Head of caudate nucleus (tissue), 42 donors: ENCODE measurements at regions of chr4 and their contacts with region 1.

Region 1: DNA sequence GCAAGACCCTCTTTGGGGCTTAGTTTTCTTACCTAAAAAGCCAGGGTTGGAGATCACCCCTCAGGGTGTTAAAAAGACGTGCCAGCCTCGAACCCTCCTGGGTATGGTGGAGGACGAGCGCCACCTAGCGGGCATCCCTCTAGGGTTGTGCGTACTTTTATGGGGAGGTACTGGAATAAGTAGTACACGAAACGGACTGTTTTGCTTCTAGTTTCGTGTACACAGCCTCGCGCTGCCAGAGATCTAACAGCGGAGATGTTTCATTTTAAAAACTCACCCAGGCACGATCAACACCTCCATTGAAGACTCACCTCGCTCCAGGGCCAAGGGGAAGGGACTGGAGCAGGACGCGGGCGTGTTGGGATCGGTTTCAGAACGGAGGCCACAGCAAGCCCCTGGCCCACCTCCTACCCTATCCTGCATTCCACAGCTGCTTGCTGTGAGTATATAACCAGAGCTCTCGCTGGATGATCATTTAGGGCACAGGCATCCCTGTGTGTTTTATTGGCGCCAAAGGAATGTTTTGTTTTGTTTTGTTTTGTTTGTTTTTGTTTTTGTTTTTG is 4.8 kb upstream of the NKX3-2 start:
- DNase-seq: peak in 41 of 42 donors; percentile 46 to 93 (median 78)

Region 2: DNA sequence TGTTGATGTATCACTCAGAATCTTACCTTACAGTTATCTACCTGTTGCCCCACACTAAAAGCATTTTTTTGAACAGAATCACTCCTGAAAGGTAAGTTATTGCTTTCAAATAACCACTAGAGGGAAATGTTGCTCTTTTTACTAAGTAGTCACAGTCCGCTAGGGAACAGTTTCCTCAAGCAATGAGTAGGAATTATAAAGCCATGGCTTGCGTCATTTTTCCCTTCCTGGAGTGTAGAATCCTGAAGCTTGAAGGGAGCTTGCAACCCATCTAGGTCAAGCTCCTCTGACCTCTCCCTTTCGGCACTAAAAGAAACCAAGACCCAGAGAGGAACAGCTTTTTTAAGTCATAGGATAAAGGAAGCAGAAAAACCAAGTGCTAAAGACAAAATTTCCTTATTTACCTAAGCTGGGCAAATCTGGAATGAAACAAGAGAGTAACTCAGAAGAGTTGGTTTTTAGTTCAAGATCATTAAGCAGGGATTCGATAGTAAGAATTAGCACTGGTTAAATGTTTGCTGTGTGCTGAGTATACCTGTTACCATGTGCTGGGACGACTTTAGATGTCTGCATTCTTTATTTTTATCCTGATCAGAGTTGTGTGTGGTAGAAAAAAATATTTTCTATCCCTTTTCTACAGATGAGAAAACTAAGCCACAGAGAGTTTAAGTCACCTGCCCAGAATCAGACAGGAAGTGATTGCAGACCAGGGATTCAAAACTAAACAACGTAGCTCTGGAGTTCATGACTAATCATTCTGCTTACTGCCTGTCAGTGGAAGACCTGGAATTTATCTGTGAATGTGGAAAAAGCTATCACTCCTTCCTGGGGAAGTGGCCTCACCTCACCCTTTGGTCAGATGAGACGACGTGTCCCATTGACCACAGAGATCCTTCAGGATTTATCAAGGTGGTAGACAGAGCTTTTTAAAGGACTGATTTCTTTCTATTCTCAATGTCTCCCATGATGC is 696.4 kb before region 1 on chr4:
- intact Hi-C with region 1: loop called (anchors 5 kb)
- DNase-seq: peak in 10 of 42 donors; percentile 1 to 39 (median 10)

Region 3: GRCh38 chr4:13829457-13829856 is 280.4 kb after region 1 on chr4:
- intact Hi-C with region 1: no loop called
- DNase-seq: no peak